ENCODE measurements at regions of chr6 and their contacts with region 1.

Region 1: GRCh38 chr6:35240840-35241801 is 18.4 kb upstream of the ZNF76 start:
- DNase-seq: peak; percentile 72 to 89
- ATAC-seq: peak; percentile 69
- H3K4me3 ChIP-seq: no peak overlapping the region
- H3K27ac ChIP-seq: peak overlapping the region in 1 of 2 donors; percentile 0
- H3K4me1 ChIP-seq: peaks cover 0 to 8% of the 10 kb centered on the region in 2 donors
- H3K27me3 ChIP-seq: no peaks in the 10 kb centered on the region

Region 2: GRCh38 chr6:34986845-34987246 is 254.3 kb before region 1 on chr6:
- intact Hi-C with region 1: loop called in 1 of 2 experiments (anchors 5 kb)
- DNase-seq: peak; percentile 64 to 85
- ATAC-seq: peak; percentile 89
- H3K4me3 ChIP-seq: no peak overlapping the region
- H3K27ac ChIP-seq: peak overlapping the region in 1 of 2 donors; percentile 38
- H3K4me1 ChIP-seq: no peaks in the 10 kb centered on the region
- H3K27me3 ChIP-seq: no peaks in the 10 kb centered on the region

Region 3: GRCh38 chr6:35128496-35128895 is 112.6 kb before region 1 on chr6:
- intact Hi-C with region 1: no loop called
- DNase-seq: no peak
- ATAC-seq: no peak
- H3K4me3 ChIP-seq: no peak overlapping the region
- H3K27ac ChIP-seq: no peak overlapping the region
- H3K4me1 ChIP-seq: no peaks in the 10 kb centered on the region
- H3K27me3 ChIP-seq: no peaks in the 10 kb centered on the region

Region 4: GRCh38 chr6:35209081-35209480 is 32.0 kb before region 1 on chr6:
- intact Hi-C with region 1: loop called (anchors 5 kb)
- DNase-seq: no peak
- ATAC-seq: no peak
- H3K4me3 ChIP-seq: no peak overlapping the region
- H3K27ac ChIP-seq: no peak overlapping the region
- H3K4me1 ChIP-seq: no peaks in the 10 kb centered on the region
- H3K27me3 ChIP-seq: no peaks in the 10 kb centered on the region

Region 5: DNA sequence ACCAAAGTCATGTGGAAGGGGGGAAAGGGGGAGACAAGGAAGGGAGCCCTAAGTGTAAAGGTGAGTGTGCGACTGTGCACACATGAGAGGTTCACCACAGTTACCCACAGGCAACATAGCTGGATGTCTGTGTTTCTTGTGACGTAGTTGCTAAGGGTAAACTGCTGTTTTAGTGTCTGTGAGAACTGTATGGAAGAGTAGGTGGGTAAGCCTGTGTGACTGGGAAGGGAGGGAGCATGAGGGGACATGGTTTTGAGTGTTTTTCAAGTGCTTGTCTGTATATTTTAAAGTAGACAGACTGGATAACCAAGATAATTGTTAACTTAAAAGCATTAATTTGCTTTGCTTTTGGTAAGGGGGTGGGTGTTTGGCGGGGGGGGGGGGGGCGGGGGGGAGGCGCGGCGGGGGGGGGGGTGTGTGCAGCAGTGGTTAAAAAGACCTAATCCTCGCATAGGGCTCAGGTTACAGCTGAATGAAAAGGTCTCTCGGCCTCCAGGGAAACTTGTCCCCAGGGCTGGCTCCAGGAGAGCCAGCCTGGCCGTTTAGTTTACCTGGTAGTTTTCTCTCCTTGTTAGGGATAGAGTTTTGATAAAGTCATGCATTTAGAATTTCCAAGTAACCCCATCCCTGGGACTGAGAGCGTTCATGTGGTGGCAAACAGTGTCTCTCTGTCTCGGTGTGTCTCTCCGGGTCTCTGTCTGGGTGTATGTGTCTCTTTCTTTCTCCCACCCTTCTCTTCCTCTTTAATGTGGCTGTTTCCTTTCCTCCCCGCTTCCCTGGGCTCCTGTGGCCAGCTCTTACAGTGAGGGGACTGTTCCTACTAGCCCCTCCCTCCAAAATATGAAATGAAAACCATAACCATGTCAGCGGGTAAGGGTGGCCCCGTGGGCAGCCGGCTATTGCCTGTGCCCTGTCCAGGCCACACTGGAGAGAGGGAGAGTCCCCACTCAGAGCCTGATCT is 24.0 kb before region 1 on chr6:
- intact Hi-C with region 1: loop called in 1 of 2 experiments (anchors 2 kb)
- DNase-seq: no peak
- ATAC-seq: no peak
- H3K4me3 ChIP-seq: peak overlapping the region in 1 of 2 donors; percentile 96
- H3K27ac ChIP-seq: peak overlapping the region; percentile 77 to 79
- H3K4me1 ChIP-seq: peaks cover 4 to 27% of the 10 kb centered on the region in 2 donors
- H3K27me3 ChIP-seq: no peaks in the 10 kb centered on the region

Region 6: GRCh38 chr6:35411066-35411465 is 169.9 kb after region 1 on chr6:
- intact Hi-C with region 1: no loop called
- DNase-seq: no peak
- ATAC-seq: no peak
- H3K4me3 ChIP-seq: no peak overlapping the region
- H3K27ac ChIP-seq: no peak overlapping the region
- H3K4me1 ChIP-seq: no peaks in the 10 kb centered on the region
- H3K27me3 ChIP-seq: no peaks in the 10 kb centered on the region

Measured in aorta (tissue), 5 donors.